Posterior cingulate gyrus (tissue), 11 donors: ENCODE measurements at regions of chr3 and their contacts with region 1.

Region 1: DNA sequence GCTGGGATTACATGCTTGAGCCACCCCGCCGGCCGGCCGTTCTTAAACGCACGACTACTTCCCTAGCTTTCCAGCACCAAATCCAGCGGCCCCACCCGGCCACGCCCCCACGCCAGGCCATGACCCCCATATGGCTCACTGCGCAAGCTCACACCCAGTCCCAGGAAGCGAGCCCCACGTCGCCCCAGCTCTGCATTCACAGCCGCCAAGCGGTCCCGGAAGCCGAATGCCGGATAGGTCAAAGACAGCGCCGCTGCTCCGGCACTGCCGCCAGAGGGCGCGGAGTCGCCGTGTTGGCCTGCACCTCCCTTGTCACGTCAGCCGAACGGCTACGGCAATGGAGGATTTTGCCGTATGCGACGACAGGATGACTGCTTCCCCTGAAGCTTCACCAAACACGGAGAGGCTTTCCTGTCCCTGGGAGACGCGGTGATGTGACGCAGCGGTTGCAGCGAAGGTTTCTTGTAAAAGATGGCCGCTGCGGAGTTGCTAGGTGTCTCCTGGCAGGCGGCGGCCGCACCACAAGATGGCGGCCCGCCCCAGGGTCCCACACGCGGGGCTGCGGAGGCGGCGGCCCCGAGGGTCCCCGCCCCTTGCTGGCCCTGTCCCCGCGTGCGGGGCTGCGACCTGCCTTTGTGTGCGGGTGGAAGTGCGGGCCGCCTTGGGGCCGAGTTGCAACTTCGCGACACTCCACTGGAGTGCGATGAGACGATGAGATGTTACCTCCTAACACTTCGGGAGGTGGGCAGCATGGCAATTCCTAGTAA is 30.2 kb upstream of the RPN1 start:
- DNase-seq: peak; percentile 97 to 100 (median 98)

Region 2: DNA sequence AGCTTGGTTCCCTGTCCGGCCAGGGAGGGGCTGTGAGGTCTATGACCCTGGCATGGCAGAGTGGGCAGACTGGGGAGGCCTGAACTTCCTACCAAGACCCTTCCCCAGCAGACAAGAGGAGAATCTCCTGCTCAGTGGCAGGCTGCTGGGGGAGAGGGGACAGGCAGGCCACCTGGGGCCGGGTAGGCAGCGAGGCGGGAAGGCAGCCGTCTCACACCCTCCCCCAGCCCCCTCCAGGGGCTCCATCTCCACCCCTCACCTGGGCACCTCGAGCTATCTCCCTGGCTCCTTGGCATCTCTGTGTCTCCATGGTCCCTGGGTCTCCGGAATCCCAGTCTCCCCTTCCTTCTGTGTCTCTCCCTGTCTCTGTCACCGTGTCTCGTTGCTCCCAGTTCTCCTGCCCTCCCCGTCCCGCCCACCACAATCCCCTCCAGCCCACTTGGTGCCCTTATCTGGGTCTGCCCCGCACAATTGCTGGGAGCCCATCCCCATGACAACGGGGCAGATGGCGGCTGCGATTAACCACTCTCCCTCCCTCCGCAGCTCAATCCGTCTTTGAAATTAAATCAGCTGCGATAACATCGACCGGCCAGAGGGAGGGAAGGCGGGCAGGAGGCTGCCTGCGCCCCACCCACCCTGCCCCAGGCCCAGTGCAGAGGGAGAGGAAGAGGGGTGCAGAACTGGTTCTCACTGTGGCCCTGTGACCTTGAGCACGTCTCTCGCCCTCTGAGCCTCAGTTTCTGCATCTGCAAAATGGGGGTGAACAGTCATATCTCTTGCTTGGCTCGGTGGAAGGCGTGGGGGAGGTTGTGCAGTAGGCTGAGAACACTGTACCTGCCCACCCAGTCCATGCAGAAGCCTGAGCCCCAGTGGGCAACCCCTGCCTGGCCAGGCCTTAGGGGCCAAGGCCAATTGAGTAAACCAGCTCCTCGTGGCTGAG is 223.7 kb before region 1 on chr3:
- intact Hi-C with region 1: no loop called
- DNase-seq: peak in 2 of 10 donors; percentile 42 to 66

Region 3: DNA sequence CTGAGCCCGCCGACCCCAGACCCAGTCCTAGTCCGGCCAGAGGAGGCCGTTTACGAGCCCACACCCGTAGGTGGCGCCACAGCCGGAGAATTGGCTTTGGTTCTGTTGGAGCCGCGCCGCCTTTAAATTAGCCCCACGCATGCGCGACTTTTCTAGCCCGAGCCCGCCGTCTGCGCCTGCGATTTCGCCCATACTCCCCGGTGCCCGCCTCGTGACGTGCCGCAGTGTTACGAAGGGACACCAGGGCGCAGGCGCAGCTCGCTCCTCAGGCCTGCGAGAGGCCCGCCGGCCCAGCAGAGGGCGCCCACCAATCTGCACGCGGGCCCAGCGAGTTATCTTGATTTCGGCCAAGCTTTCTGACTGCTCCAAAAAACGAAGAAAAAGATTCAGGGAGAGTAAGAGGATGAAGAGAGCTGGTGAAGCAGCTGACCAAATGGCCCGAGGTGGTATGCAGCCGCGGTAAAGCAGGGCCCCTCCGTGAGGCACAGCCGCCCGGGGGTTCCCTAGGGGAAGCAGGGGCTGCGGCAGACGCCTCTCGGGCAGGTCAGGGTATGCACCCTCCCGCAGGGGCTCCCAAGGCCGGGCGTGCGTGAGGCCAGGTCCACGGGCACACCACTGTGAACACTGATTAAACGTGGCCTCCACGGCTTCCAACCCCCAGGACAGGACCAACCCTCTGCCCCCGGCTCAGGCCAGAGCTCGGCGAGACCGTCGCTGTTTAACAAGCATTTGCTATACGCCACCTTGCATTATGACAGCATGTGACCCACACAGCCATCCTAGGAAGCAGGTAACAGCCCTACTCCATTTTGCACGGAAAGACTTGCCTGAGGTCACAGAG is 63.0 kb before region 1 on chr3:
- intact Hi-C with region 1: loop called (anchors 5 kb)
- DNase-seq: peak; percentile 94 to 99 (median 98)

Region 4: DNA sequence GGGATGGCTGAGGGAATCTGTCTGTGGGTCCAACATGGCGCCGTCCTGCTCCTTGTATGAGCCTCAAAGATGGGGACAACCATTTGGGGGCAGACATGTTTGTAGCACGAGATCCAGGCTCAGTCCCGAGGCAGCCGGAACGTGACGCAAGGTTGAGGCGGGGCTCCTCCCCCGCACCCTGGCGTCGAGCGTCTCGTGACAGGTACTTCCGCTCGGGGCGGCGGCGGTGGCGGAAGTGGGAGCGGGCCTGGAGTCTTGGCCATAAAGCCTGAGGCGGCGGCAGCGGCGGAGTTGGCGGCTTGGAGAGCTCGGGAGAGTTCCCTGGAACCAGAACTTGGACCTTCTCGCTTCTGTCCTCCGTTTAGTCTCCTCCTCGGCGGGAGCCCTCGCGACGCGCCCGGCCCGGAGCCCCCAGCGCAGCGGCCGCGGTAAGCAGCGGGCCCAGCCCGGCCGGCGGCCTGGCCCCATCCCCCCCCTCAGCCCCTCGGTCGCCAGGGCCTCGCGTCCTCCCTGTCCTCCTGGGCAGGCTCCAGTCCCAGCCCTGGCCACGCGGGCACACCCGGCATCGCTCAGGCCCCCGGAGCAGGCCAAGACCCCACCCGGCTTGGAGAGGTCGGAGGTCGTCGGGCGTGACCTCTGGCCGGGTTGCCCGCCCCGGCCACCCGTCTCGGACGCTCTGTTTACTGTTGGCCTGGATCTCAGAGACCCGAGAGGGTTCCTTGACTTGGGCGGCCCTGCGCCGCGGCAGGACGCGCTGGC is 45.3 kb after region 1 on chr3 and contains the start of gene RAB7A:
- intact Hi-C with region 1: loop called (anchors 5 kb)
- DNase-seq: peak; percentile 96 to 99 (median 98)

Region 5: GRCh38 chr3:128845778-128846485 is 165.1 kb after region 1 on chr3:
- intact Hi-C with region 1: loop called (anchors 2 kb)
- DNase-seq: peak; percentile 68 to 97 (median 83)

Region 6: GRCh38 chr3:128879125-128879969 is 198.6 kb after region 1 on chr3 and contains the start of gene ACAD9:
- intact Hi-C with region 1: loop called (anchors 1 kb)
- DNase-seq: peak; percentile 95 to 100 (median 98)

Region 7: DNA sequence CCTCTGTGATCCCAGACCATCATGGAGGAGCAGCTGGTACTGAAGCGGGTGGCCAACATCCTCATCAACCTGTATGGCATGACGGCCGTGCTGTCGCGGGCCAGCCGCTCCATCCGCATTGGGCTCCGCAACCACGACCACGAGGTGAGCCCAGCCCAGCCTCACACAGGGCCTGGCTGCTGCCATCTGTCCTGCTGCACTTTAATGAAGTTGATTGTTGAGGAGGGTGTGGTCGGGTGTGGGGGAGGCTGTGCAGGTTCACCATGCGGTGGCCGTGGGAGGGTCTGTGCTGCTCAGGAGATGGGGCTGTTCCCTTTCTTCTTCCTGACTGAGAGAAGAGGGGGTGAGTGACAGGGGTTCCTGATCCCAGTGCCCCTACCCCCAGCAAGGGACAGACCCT is 229.2 kb after region 1 on chr3:
- intact Hi-C with region 1: no loop called
- DNase-seq: peak in 1 of 10 donors; percentile 77